Panc1 (cell line): ENCODE measurements at regions of chr10 and their contacts with region 1.

Region 1: GRCh38 chr10:71893920-71894319 is 42.9 kb upstream of the PSAP start:
- DNase-seq: no peak
- ATAC-seq: no peak
- H3K4me3 ChIP-seq: no peak overlapping the region
- H3K27ac ChIP-seq: peak overlapping the region; percentile 49
- H3K4me1 ChIP-seq: peaks cover 43% of the 10 kb centered on the region
- H3K27me3 ChIP-seq: no peaks in the 10 kb centered on the region
- CTCF ChIP-seq: no peak

Region 2: GRCh38 chr10:71138166-71138830 is 755.6 kb before region 1 on chr10:
- CTCF ChIA-PET with region 1: no interaction called
- POLR2A ChIA-PET with region 1: no interaction called
- in situ Hi-C with region 1: no loop called
- intact Hi-C with region 1: no loop called
- DNase-seq: no peak
- ATAC-seq: no peak
- H3K4me3 ChIP-seq: no peak overlapping the region
- H3K27ac ChIP-seq: no peak overlapping the region
- H3K4me1 ChIP-seq: no peaks in the 10 kb centered on the region
- H3K27me3 ChIP-seq: peaks cover 31% of the 10 kb centered on the region
- CTCF ChIP-seq: no peak

Region 3: DNA sequence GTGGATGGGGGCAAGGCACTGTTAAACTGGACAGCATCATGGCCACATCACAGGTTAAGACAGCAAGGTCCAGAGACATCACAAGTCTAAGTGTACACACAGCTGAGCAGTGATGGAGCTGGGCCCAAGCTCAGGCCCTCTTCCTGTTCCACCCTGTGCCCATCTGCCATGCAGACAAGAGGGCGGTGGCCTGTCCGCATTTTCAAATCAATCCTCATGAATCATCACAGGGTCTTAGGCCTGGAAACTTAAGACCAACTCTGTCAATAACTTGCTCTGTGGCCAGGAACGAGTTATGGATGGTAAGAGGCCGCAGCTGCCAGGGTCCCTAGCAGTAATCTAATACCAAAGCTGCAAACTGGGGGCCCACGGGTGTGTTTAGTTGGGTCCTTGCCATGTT is 177.5 kb before region 1 on chr10:
- CTCF ChIA-PET with region 1: no interaction called
- POLR2A ChIA-PET with region 1: interaction called, 19 read pairs
- in situ Hi-C with region 1: no loop called
- intact Hi-C with region 1: no loop called
- DNase-seq: no peak
- ATAC-seq: peak; percentile 20; the same call in 1 of the 2 replicates
- H3K4me3 ChIP-seq: no peak overlapping the region
- H3K27ac ChIP-seq: no peak overlapping the region
- H3K4me1 ChIP-seq: peaks cover 7% of the 10 kb centered on the region
- H3K27me3 ChIP-seq: no peaks in the 10 kb centered on the region
- CTCF ChIP-seq: no peak

Region 4: GRCh38 chr10:71850637-71851464 is 43.1 kb before region 1 on chr10 and contains the start of gene PSAP:
- CTCF ChIA-PET with region 1: interaction called, 11 read pairs
- POLR2A ChIA-PET with region 1: interaction called, 4 read pairs
- in situ Hi-C with region 1: no loop called
- intact Hi-C with region 1: no loop called
- DNase-seq: peak; percentile 95
- ATAC-seq: peak; percentile 95
- H3K4me3 ChIP-seq: peak within 1 kb of the TSS; percentile 78 to 86
- H3K27ac ChIP-seq: peak within 1 kb of the TSS; percentile 96
- H3K4me1 ChIP-seq: peaks cover 39% of the 10 kb centered on the region
- H3K27me3 ChIP-seq: no peaks in the 10 kb centered on the region
- CTCF ChIP-seq: no peak
- total RNA-seq, gene PSAP: 3,649 TPM

Region 5: GRCh38 chr10:71974489-71975021 is 80.6 kb after region 1 on chr10:
- CTCF ChIA-PET with region 1: interaction called, 11 read pairs
- POLR2A ChIA-PET with region 1: interaction called, 3 read pairs
- in situ Hi-C with region 1: no loop called
- intact Hi-C with region 1: loop called (anchors 5 kb)
- DNase-seq: peak; percentile 45
- ATAC-seq: peak; percentile 32
- H3K4me3 ChIP-seq: no peak overlapping the region
- H3K27ac ChIP-seq: peak overlapping the region; percentile 79
- H3K4me1 ChIP-seq: peaks cover 96% of the 10 kb centered on the region
- H3K27me3 ChIP-seq: no peaks in the 10 kb centered on the region
- CTCF ChIP-seq: no peak

Region 6: DNA sequence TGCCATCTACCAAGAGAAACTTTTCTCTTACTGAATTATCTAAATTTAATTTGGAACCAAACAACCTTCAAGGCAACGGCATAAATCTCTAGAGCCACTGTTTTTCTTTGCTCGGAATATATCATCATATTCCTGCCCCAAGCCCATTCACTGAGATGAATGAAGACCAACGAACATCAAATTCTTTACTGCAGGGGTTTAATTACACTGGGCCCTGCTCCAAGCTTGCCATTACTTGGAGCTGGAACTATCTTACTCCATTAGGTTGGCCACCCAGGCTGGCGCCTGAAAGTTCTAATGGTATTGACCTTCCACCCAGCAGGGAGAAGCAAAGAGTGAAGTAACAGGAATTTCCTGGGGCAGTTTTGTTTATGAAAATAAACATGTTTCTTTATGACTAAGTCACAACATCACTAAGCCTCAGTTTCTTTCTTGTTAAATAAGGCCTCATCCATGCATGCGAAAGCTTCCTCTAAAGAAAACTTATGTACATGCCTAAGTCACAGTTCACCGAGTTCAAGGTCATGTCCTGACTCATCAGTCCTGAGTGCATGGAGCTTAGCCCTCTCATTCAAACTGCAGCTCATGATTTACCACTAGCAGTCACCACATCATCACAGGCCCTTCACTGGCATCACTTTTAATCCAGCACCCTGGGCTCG is 279.8 kb after region 1 on chr10:
- CTCF ChIA-PET with region 1: no interaction called
- POLR2A ChIA-PET with region 1: no interaction called
- in situ Hi-C with region 1: no loop called
- intact Hi-C with region 1: no loop called
- DNase-seq: peak; percentile 92
- ATAC-seq: peak; percentile 91
- H3K4me3 ChIP-seq: peak overlapping the region in 1 of 2 experiments; percentile 12; a peak in 1 of 4 replicates
- H3K27ac ChIP-seq: peak overlapping the region; percentile 100
- H3K4me1 ChIP-seq: peaks cover 88% of the 10 kb centered on the region
- H3K27me3 ChIP-seq: no peaks in the 10 kb centered on the region
- CTCF ChIP-seq: peak; percentile 52; the same call in 1 of the 2 replicates

Region 7: DNA sequence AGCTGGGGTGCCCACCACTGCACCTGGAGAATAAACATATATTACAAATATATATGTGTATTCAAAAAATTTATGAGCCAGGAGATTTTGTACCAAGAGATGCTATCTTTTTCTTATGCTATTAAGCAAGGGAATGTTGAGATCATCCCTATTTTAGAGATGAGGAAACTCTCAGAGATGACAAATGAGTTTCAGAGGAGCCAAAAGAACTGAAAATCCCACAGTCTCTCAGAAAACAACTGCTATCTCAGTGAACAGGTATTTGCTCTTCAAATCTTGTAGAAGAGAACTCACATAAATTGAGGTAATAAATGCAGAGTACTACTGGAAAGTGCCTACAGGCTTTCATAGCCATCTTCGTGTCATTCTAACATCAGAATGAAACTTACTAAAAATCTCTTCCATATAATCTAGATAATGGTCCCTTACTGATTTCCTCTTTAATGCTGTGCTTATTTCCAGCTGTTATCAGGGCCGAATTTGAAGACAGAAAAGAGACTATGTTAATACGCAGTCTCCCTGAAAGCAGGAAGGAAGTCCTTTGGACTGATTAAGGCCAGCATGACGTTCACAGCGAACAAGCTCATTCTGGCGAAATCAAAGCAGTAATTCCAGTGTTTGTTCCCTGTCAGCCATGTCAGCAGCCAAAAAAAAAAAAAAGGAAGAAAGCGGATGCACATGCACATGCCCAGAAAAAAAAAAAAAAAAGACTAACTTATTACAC is 292.5 kb after region 1 on chr10:
- CTCF ChIA-PET with region 1: no interaction called
- POLR2A ChIA-PET with region 1: no interaction called
- in situ Hi-C with region 1: no loop called
- intact Hi-C with region 1: no loop called
- DNase-seq: no peak
- ATAC-seq: no peak
- H3K4me3 ChIP-seq: no peak overlapping the region
- H3K27ac ChIP-seq: peak overlapping the region; percentile 81
- H3K4me1 ChIP-seq: peaks cover 7% of the 10 kb centered on the region
- H3K27me3 ChIP-seq: no peaks in the 10 kb centered on the region
- CTCF ChIP-seq: no peak

Region 8: GRCh38 chr10:72223743-72224101 is 329.8 kb after region 1 on chr10:
- CTCF ChIA-PET with region 1: interaction called, 11 read pairs
- POLR2A ChIA-PET with region 1: no interaction called
- in situ Hi-C with region 1: no loop called
- intact Hi-C with region 1: loop called (anchors 10 kb)
- DNase-seq: no peak
- ATAC-seq: no peak
- H3K4me3 ChIP-seq: no peak overlapping the region
- H3K27ac ChIP-seq: peak overlapping the region; percentile 84
- H3K4me1 ChIP-seq: peaks cover 22% of the 10 kb centered on the region
- H3K27me3 ChIP-seq: no peaks in the 10 kb centered on the region
- CTCF ChIP-seq: no peak